Activated B cell treated with CpG ODN at 0.5 μM for 24 hours (primary cell): ENCODE measurements at regions of chr7 and their contacts with region 1.

Region 1: GRCh38 chr7:20798081-20798693 is 11.5 kb upstream of the SP8 start:
- DNase-seq: no peak
- ATAC-seq: peak; percentile 82
- H3K4me3 Mint-ChIP-seq: peak overlapping the region; percentile 76
- H3K27ac Mint-ChIP-seq: no peak overlapping the region
- H3K4me1 Mint-ChIP-seq: peaks cover 22% of the 10 kb centered on the region
- H3K27me3 Mint-ChIP-seq: peaks cover 42% of the 10 kb centered on the region
- CTCF ChIP-seq: no peak

Region 2: DNA sequence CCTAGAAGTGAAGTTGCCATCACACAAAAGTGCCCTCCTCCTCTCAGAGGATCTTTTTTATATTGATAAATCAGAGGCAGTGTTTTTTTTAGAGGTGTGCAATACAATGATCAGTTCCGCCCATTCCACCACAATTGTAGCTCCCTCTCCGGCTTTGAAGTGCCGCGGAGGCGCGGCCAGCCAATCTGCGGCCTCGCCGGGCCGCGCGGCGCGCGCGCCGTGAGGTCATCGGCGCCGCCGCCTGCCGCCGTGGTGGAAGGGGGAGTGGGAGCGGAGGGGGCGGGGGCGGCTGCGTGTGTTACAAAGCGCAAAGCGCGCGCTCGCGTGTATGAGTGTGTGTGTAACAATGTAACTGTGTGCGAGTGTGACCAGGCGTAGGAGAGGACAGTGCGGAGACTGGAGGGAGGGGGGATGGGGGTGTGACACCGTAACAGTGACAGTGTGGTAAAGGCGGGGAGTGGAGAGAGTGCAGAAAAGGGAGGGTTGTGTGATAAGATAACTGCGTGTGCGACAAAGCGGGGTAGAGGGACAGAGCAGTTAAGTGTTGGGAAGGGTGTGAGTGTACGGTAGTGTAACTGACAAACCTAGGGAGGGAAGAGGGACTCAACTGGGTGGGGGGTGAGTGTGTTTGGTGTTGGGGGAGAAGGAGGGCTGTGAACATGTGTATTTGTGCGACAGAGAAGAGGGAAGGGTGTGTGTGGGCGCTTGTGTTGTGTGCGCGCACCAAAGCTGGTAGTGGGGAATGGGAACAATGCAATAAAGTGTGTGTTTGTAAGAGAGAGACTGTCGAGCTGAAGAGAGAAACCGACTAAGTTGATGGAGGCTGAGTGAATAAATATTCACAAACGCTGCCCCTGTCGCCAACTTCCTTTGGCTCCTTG is 11.2 kb before region 1 on chr7 and contains the start of gene SP8:
- CTCF ChIA-PET with region 1: no interaction called
- POLR2A ChIA-PET with region 1: no interaction called
- intact Hi-C with region 1: loop called (anchors 1 kb)
- DNase-seq: no peak
- ATAC-seq: peak; percentile 18
- H3K4me3 Mint-ChIP-seq: peak within 1 kb of the TSS; percentile 62
- H3K27ac Mint-ChIP-seq: peak within 1 kb of the TSS; percentile 59
- H3K4me1 Mint-ChIP-seq: peaks cover 21% of the 10 kb centered on the region
- H3K27me3 Mint-ChIP-seq: peaks cover 66% of the 10 kb centered on the region
- CTCF ChIP-seq: no peak
- total RNA-seq, gene SP8: not detected in 2 replicates

Region 3: DNA sequence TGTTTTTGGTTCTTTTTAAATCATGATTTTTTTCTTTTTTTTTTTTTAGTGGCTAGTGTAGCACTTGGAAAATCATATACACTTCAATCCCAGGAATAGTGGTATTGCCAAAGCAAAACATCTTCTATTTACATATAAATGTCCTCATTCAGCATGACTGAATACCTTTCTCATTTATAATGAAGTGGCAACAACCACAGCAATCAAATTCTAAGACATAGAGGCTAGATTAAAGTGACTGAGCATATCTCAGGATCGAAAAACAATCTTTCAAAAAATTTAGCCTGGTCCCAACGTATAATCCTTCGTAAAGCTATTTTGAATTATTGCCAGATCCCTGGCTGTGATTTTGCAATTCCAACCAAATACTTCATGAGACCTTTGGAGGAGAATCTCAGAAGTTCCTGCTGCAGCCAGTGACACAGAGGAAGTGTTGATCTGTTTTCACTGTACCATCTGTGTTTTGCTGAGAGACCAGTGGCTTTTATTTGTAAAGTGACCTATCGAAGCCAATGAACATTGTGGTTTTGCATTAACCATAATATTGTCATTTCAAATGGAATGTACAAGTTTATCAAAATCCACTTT is 18.3 kb after region 1 on chr7:
- CTCF ChIA-PET with region 1: no interaction called
- POLR2A ChIA-PET with region 1: no interaction called
- intact Hi-C with region 1: no loop called
- DNase-seq: no peak
- ATAC-seq: no peak
- H3K4me3 Mint-ChIP-seq: no peak overlapping the region
- H3K27ac Mint-ChIP-seq: no peak overlapping the region
- H3K4me1 Mint-ChIP-seq: no peaks in the 10 kb centered on the region
- H3K27me3 Mint-ChIP-seq: peaks cover 2% of the 10 kb centered on the region
- CTCF ChIP-seq: no peak

Region 4: GRCh38 chr7:22082886-22083703 is 1284.9 kb after region 1 on chr7:
- CTCF ChIA-PET with region 1: no interaction called
- POLR2A ChIA-PET with region 1: no interaction called
- intact Hi-C with region 1: loop called (anchors 5 kb)
- DNase-seq: peak; percentile 91
- ATAC-seq: peak; percentile 97
- H3K4me3 Mint-ChIP-seq: peak overlapping the region; percentile 89
- H3K27ac Mint-ChIP-seq: peak overlapping the region; percentile 70
- H3K4me1 Mint-ChIP-seq: peaks cover 13% of the 10 kb centered on the region
- H3K27me3 Mint-ChIP-seq: peaks cover 25% of the 10 kb centered on the region
- CTCF ChIP-seq: peak; percentile 83